BJ (cell line): ENCODE measurements at regions of chr6 and their contacts with region 1.

Region 1: GRCh38 chr6:138297761-138298298 is 79.5 kb upstream of the PBOV1 start:
- DNase-seq: peak; percentile 7
- H3K4me3 ChIP-seq: no peak overlapping the region
- H3K27me3 ChIP-seq: no peaks in the 10 kb centered on the region; the same call in 1 of the 2 replicates
- CTCF ChIP-seq: no peak

Region 2: GRCh38 chr6:138264372-138264880 is 33.4 kb before region 1 on chr6:
- CTCF ChIA-PET with region 1: no interaction called
- POLR2A ChIA-PET with region 1: interaction called, 12 read pairs
- DNase-seq: no peak
- H3K4me3 ChIP-seq: no peak overlapping the region
- H3K27me3 ChIP-seq: no peaks in the 10 kb centered on the region
- CTCF ChIP-seq: no peak

Region 3: DNA sequence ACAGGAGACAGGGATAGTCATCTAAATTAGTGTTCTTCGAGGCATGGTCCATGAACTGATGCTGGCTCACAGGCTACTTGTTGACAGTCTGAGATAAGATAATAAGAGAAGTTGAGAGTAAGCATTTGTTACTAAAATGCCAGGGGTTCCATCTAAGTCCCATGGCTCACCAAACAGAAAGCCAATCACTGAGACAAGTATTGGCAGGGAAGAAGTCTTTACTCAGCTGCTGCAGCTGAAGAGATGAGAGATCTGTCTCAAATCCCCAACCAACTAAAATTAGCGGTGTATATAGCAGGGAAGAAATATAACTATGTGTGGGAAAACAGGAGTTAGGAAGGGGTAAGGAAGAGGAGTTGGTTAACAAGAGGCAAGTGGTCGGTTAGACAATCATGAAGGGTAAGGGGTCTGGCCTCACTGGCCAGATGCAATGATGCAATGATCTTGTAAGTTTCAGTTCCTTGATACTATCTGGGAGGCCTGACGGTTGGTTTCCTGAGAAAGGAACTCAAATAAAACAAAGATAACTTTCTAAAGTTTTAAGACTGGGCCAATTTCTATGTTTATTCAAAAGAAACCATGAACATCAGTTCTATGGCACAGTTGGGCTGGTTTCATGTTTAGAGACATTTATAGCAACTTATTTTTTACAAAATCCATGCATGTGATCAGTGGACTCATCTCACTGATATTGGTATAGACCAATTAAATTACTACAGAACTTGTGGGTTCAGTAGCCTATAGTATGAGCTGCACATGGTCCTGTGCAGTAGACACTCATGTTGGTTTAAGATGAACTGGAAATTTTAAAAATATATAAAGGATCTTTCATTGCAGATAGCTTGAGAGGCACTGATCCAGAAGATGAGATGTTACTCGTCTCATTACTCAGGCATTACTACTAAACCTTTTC is 96.3 kb after region 1 on chr6:
- CTCF ChIA-PET with region 1: no interaction called
- POLR2A ChIA-PET with region 1: no interaction called
- DNase-seq: no peak
- H3K4me3 ChIP-seq: no peak overlapping the region
- H3K27me3 ChIP-seq: no peaks in the 10 kb centered on the region; the same call in 1 of the 2 replicates
- CTCF ChIP-seq: no peak